IMR-90 (cell line): ENCODE measurements at regions of chr5 and their contacts with region 1.

Region 1: GRCh38 chr5:139633295-139634027 is 14.7 kb upstream of the CXXC5 start:
- DNase-seq: peak; percentile 73
- ATAC-seq: peak; percentile 59
- H3K4me3 ChIP-seq: no peak overlapping the region
- H3K27ac ChIP-seq: no peak overlapping the region
- H3K4me1 ChIP-seq: peaks cover 20% of the 10 kb centered on the region
- H3K27me3 ChIP-seq: no peaks in the 10 kb centered on the region
- CTCF ChIP-seq: peak; percentile 99
- POLR2A ChIP-seq: 0 out of 2 replicates have a peak, but pooled peaks have one; percentile 43
- RAD21 ChIP-seq: peak; percentile 95

Region 2: GRCh38 chr5:139422307-139422893 is 211.1 kb before region 1 on chr5:
- CTCF ChIA-PET with region 1: interaction called, 3 read pairs
- POLR2A ChIA-PET with region 1: no interaction called
- dilution Hi-C with region 1: no loop called
- in situ Hi-C with region 1: no loop called
- intact Hi-C with region 1: loop called (anchors 1 kb)
- DNase-seq: peak; percentile 78
- ATAC-seq: peak; percentile 96
- H3K4me3 ChIP-seq: no peak overlapping the region
- H3K27ac ChIP-seq: no peak overlapping the region
- H3K4me1 ChIP-seq: peaks cover 7% of the 10 kb centered on the region; the same call in 1 of the 2 replicates
- H3K27me3 ChIP-seq: no peaks in the 10 kb centered on the region
- CTCF ChIP-seq: peak; percentile 94
- POLR2A ChIP-seq: 0 out of 2 replicates have a peak, but pooled peaks have one; percentile 34
- RAD21 ChIP-seq: peak; percentile 97

Region 3: DNA sequence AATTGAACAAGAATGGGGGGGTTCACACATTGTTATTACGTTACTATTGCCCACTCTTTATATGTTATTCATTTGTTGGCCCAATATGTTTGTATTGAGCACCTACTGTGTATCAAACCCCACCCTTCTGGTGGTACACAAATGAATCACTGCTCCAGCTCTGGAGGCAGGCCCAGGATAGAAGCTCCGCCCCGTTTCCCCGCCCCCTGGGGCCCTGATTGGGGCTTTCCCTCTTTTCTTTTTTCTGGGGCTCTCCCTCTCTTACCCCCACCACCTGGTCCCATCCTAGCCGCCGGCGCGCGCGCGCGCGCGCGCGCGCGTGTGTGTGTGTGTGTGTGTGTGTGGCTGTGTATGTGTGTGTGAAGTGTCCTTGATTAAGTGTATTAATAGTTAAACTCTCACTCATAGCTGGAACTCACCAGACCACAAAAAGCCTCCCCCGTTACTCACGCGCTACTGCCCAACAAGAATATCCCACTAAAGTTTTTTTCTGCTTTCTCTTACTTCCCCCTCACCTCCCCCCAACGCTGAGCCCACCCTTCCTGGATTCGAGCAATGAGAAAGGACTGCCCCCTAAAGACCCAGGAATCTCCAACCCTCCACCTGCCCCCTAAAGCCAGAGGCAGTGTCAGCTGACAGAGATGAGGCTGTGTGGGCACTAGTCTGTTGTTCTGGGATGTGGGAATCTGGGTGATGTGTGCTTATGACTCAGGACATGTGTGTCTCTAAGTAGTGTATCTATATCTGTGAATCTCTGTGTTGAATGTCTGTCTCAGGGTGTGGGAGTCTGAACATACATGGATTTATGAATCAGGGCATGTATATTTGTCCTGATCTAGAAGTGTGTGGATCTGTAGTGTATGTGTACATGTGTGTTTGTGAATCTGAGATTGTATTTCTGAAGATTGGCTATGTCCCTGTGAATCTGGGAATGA is 18.7 kb after region 1 on chr5:
- CTCF ChIA-PET with region 1: interaction called, 12 read pairs
- POLR2A ChIA-PET with region 1: interaction called, 9 read pairs
- dilution Hi-C with region 1: no loop called
- in situ Hi-C with region 1: no loop called
- intact Hi-C with region 1: loop called (anchors 1 kb)
- DNase-seq: peak; percentile 94
- ATAC-seq: peak; percentile 40
- H3K4me3 ChIP-seq: peak overlapping the region; percentile 17; the same call in 1 of the 2 replicates
- H3K27ac ChIP-seq: peak overlapping the region; percentile 86
- H3K4me1 ChIP-seq: peaks cover 46% of the 10 kb centered on the region
- H3K27me3 ChIP-seq: no peaks in the 10 kb centered on the region
- CTCF ChIP-seq: no peak
- POLR2A ChIP-seq: no peak
- RAD21 ChIP-seq: no peak; the same call in 1 of the 2 replicates

Region 4: DNA sequence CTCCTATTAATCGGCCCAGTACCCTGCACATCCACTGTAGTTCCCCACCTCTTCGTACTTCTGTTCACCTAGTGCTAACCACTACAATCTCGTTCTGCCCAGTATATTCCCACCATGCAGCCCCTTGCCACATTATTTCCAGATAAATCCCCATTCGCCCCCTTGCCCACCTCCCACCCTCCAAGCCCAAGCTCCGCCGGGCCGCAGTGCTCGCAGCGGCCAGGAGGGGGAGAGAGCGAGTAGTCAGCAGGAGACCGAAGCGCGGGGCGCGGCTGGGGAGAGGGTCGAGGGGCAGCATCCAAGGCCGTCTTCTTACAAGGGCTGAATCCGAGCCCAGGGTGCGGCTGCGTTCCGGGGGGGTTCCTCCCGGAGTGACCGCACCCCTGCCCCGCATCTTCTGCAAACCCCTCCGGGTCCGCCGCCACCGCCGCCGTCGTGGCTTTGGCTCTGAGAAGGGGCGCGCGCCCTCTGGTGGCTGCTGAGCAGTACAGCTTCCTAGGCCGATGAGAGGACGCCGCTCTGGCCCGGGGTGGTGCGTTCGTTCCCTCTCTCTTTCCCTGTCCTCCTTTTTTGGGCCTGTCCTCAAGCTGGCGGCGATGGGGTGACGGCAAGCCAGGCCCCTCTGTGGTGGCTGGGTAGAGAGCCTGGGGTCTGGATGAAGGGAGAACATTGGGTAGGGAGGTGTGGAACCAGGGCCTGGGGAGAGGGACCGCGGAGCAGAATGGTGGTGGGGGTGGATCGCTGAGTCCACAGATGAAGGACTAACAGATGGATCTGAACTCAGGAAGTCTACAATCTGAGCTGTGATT is 132.2 kb after region 1 on chr5:
- CTCF ChIA-PET with region 1: interaction called, 59 read pairs
- POLR2A ChIA-PET with region 1: no interaction called
- dilution Hi-C with region 1: loop called (anchors 25 kb)
- in situ Hi-C with region 1: loop called (anchors 5 kb)
- intact Hi-C with region 1: loop called (anchors 1 kb)
- DNase-seq: peak; percentile 57
- ATAC-seq: peak; percentile 94
- H3K4me3 ChIP-seq: peak overlapping the region; percentile 59
- H3K27ac ChIP-seq: no peak overlapping the region; the same call in 1 of the 2 replicates
- H3K4me1 ChIP-seq: no peaks in the 10 kb centered on the region
- H3K27me3 ChIP-seq: peaks cover 31% of the 10 kb centered on the region
- CTCF ChIP-seq: peak; percentile 61
- POLR2A ChIP-seq: no peak
- RAD21 ChIP-seq: peak; percentile 78

Region 5: DNA sequence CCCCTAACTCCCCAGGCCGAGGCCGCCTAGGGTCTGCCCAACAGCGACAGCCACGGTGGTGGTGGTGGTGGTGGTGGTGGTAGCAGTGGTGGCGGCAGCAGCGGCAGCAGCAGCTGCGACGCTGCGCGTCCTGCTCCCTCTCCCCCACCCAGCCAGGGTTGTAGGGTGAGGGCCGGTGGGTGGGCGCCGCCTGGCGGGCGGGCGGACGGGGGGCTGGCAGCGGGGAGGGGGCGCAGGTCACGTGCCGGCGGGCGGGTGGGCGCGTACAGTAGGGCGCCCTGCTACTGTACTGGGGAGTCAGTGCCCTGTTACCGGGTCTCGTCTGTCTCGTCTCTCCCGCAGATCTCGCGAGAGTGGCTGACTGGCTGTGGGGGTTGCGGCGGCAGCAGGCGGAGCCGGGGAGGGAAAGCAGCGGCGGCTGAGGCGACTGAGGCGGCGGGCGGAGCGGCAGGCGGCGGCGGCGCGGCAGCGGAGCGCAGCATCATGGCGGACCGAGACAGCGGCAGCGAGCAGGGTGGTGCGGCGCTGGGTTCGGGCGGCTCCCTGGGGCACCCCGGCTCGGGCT is 480.3 kb after region 1 on chr5 and contains the start of gene PURA:
- CTCF ChIA-PET with region 1: no interaction called
- POLR2A ChIA-PET with region 1: no interaction called
- dilution Hi-C with region 1: no loop called
- in situ Hi-C with region 1: loop called (anchors 25 kb)
- intact Hi-C with region 1: no loop called
- DNase-seq: peak; percentile 92
- ATAC-seq: peak; percentile 91
- H3K4me3 ChIP-seq: peak within 1 kb of the TSS; percentile 87
- H3K27ac ChIP-seq: peak within 1 kb of the TSS; percentile 96
- H3K4me1 ChIP-seq: peaks cover 8% of the 10 kb centered on the region
- H3K27me3 ChIP-seq: no peaks in the 10 kb centered on the region
- CTCF ChIP-seq: no peak
- POLR2A ChIP-seq: peak; percentile 46; the same call in 1 of the 2 replicates
- RAD21 ChIP-seq: no peak
- total RNA-seq, gene PURA: 5.6 and 13.9 TPM in 2 replicates